ENCODE measurements at regions of chr6 and their contacts with region 1.

Region 1: GRCh38 chr6:35583893-35584688 is 71.4 kb upstream of the TULP1 start:
- DNase-seq: peak; percentile 53 to 79 (median 65)
- ATAC-seq: peak; percentile 64 to 65
- H3K4me3 ChIP-seq: no peak overlapping the region
- H3K27ac ChIP-seq: peak overlapping the region; percentile 66
- H3K4me1 ChIP-seq: peaks cover 7% of the 10 kb centered on the region
- H3K27me3 ChIP-seq: no peaks in the 10 kb centered on the region

Region 2: DNA sequence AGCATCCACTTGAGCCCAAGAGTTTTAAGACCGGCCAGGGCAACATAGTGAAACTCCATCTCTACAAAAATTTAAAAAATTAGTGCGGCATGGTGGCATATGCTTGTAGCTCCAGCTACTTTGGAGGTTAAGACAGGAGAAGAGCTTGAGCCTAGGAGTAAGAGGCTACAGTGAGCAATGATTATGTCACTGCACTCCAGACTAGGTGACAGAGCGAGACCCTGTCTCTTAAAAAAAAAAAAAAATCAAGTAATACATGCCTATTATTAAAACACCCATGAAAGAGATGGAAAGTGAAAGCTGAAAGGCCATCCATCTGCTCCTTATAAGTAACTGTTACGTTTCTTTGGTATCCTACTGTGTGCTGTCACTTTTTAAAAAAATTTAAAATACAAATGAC is 38.2 kb after region 1 on chr6:
- intact Hi-C with region 1: loop called in 1 of 4 experiments (anchors 2 kb)
- DNase-seq: no peak
- ATAC-seq: no peak
- H3K4me3 ChIP-seq: no peak overlapping the region
- H3K27ac ChIP-seq: no peak overlapping the region
- H3K4me1 ChIP-seq: peaks cover 3% of the 10 kb centered on the region
- H3K27me3 ChIP-seq: no peaks in the 10 kb centered on the region

Region 3: GRCh38 chr6:35634316-35634715 is 50.2 kb after region 1 on chr6:
- intact Hi-C with region 1: loop called in 2 of 4 experiments (anchors 10 kb)
- DNase-seq: peak in 2 of 3 donors; percentile 43 to 84
- ATAC-seq: peak; percentile 75 to 80
- H3K4me3 ChIP-seq: no peak overlapping the region
- H3K27ac ChIP-seq: no peak overlapping the region
- H3K4me1 ChIP-seq: peaks cover 5% of the 10 kb centered on the region
- H3K27me3 ChIP-seq: no peaks in the 10 kb centered on the region

Region 4: GRCh38 chr6:35688581-35689322 is 104.7 kb after region 1 on chr6 and contains the start of gene FKBP5:
- intact Hi-C with region 1: loop called in 1 of 4 experiments (anchors 10 kb)
- DNase-seq: peak; percentile 97 to 99 (median 98)
- ATAC-seq: peak; percentile 95 to 96
- H3K4me3 ChIP-seq: peak within 1 kb of the TSS; percentile 86
- H3K27ac ChIP-seq: peak within 1 kb of the TSS; percentile 99
- H3K4me1 ChIP-seq: peaks cover 14% of the 10 kb centered on the region
- H3K27me3 ChIP-seq: no peaks in the 10 kb centered on the region
- total RNA-seq, gene FKBP5: 109 to 155 (median 111) TPM

Region 5: DNA sequence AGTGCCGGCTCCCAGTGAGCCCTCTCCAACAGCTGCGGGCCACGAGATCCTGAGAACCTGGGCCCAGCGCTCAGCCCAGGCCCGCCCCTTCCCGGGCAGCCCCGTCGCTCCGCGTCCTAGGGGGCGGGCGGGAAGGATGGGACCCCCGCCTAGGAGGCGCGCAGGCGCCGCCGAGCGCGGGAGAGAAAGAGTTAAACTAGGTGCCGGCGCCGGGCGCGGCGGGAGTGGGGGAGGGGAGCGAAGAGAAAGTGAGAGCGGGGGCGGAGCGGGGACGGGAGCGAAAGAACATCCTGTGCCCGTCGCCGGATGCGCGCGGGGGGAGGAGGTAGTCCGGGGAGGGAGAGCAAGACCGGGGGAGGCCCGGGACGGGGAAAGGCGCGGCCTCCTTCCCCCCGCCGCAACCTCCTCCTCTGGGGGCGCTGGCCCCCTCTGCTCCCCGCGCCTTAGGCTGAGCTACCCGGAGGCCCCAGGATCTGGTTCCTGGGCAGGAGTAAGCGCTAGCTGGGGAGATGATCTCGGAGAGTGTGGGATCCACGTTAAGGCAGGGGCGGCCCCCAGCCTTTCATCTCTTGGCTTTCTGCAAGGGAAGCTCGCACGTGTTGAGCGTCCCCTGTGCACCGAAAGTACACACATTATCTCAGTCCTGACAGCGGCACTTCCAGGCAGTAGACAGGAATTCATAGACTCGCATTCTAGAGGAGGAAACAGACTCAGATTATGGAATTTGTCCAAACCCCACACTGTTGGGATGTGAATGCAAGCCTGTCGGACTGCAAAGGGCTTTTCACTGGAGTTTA is 147.8 kb after region 1 on chr6:
- intact Hi-C with region 1: loop called in 3 of 4 experiments (anchors 2 to 5 kb)
- DNase-seq: peak; percentile 98 to 99 (median 98)
- ATAC-seq: peak; percentile 79 to 81
- H3K4me3 ChIP-seq: peak overlapping the region; percentile 67
- H3K27ac ChIP-seq: peak overlapping the region; percentile 100
- H3K4me1 ChIP-seq: peaks cover 27% of the 10 kb centered on the region
- H3K27me3 ChIP-seq: no peaks in the 10 kb centered on the region

Region 6: DNA sequence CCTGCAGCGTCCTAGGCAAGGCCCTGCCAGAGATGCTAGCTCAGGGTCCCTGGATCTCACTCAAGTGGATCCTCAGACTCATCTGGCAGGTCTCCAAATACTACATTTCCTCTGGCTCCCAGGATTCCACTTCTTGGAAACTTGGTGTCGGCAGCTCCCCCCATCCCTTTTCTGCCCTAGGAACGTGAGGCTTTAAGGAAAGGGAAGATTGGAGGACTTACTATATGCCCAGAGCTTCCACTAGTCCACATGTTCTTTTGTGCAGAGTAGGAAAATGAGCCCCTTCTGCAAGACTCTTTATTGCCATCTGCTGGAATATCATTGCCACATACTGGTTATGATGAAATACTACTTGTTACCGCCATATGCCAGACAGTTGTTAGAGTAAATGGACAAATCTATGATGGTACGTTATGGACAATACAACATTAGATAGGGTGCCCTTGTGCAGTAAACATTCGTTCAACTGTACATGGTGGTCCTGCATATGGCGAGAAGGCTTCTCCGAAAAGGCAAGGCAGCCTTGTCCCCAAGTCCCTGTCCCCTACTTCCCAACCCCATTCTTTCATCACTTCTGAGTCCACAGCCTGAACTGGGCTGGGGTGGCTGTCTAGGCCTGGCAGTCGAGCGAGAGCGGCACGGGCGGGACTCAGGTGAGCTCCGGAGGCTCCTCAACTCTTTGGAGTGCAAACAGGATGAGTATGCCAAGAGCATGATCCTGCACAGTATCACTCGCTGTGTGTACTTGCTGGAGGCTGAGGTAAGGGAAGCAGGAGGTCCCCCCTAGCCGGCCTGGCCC is 153.5 kb after region 1 on chr6:
- intact Hi-C with region 1: loop called (anchors 2 to 5 kb)
- DNase-seq: peak in 2 of 3 donors; percentile 1 to 54
- ATAC-seq: peak; percentile 78 to 81
- H3K4me3 ChIP-seq: no peak overlapping the region
- H3K27ac ChIP-seq: no peak overlapping the region
- H3K4me1 ChIP-seq: peaks cover 8% of the 10 kb centered on the region
- H3K27me3 ChIP-seq: no peaks in the 10 kb centered on the region